A549 (cell line): ENCODE measurements at regions of chr1 and their contacts with region 1.

Region 1: GRCh38 chr1:237756304-237756967 is 134.3 kb downstream of the ZP4 start:
- DNase-seq: peak in 1 of 2 experiments; percentile 13
- ATAC-seq: no peak
- H3K4me3 ChIP-seq: no peak overlapping the region
- H3K27ac ChIP-seq: no peak overlapping the region
- H3K4me1 ChIP-seq: peaks cover 15% of the 10 kb centered on the region; the same call in 1 of the 3 replicates
- CTCF ChIP-seq: no peak
- EP300 ChIP-seq: no peak
- POLR2A ChIP-seq: no peak
- RAD21 ChIP-seq: no peak

Region 2: DNA sequence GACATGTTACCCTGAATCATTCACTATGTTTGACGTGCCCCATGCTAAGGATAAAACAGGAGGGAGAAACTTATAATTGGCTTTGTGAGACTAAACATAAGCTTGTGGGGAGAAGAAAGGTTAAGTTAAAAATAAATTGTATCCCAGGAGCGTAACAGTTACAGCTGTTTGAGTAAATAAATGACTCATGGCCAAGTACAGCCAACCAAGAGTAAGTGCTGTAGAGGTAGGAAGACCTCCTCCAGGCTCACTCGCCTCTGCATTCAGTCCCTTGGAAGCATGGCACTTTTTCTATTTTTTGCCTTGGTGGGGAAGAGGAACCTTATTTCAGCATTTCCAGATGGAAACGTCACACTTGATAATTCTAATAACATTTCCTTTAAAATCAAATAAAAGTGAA is 17.8 kb after region 1 on chr1:
- CTCF ChIA-PET with region 1: no interaction called
- POLR2A ChIA-PET with region 1: interaction called, 10 read pairs
- DNase-seq: no peak
- ATAC-seq: no peak
- H3K4me3 ChIP-seq: no peak overlapping the region
- H3K27ac ChIP-seq: no peak overlapping the region
- H3K4me1 ChIP-seq: no peaks in the 10 kb centered on the region
- CTCF ChIP-seq: no peak
- EP300 ChIP-seq: no peak
- POLR2A ChIP-seq: no peak
- RAD21 ChIP-seq: no peak